Lower leg skin (tissue), 4 donors: ENCODE measurements at regions of chr7 and their contacts with region 1.

Region 1: DNA sequence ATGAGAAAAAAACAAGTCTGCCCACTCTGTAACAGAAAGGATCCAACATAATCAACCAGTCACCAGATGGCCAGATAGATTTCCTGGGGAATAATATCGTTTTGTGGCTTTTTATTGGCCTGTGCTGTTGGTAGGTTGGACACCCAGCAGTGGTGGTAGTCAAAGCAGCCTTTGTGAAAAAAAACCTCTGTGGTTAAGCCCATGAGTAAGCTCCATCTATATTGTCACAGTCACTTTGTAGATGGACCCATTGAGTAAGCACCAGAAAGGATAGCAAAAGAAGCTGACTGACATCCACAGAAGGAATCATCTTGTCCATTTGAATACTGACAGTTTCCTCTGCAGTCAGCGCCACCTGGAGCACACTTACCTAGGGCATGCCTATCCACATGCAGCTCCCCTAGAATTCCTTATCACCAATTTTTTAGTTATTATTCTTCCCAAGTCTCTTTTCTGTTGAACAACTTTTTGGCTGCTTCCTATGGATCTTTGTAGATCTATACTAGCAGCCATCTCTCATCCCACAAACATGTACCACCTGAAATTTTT is 96.9 kb downstream of the IQUB start:
- DNase-seq: no peak
- H3K4me3 ChIP-seq: no peak overlapping the region
- CTCF ChIP-seq: no peak
- POLR2A ChIP-seq: no peak

Region 2: GRCh38 chr7:121966276-121966934 is 1471.1 kb before region 1 on chr7:
- intact Hi-C with region 1: loop called (anchors 5 kb)
- DNase-seq: no peak
- H3K4me3 ChIP-seq: no peak overlapping the region
- CTCF ChIP-seq: no peak
- POLR2A ChIP-seq: no peak

Region 3: DNA sequence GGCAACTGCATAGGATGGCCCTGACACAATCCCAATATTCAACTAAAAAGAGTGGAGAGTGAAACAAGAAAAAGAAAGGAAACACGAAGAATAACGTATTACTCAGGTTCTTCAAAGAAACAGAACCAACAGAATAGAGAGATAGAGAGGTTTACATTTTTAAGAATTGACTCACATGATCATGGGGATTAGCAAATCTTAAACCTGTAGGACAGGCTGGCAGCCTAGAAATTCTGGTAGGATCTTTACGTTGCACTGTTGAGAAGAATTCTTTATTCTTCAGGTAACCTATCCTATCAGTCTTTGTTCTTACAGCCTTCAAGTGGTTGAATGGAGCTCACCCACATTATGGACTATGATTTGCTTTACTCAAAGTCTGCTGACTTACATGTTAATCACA is 1397.4 kb before region 1 on chr7:
- intact Hi-C with region 1: loop called (anchors 10 kb)
- DNase-seq: no peak
- H3K4me3 ChIP-seq: no peak overlapping the region
- CTCF ChIP-seq: no peak
- POLR2A ChIP-seq: no peak

Region 4: DNA sequence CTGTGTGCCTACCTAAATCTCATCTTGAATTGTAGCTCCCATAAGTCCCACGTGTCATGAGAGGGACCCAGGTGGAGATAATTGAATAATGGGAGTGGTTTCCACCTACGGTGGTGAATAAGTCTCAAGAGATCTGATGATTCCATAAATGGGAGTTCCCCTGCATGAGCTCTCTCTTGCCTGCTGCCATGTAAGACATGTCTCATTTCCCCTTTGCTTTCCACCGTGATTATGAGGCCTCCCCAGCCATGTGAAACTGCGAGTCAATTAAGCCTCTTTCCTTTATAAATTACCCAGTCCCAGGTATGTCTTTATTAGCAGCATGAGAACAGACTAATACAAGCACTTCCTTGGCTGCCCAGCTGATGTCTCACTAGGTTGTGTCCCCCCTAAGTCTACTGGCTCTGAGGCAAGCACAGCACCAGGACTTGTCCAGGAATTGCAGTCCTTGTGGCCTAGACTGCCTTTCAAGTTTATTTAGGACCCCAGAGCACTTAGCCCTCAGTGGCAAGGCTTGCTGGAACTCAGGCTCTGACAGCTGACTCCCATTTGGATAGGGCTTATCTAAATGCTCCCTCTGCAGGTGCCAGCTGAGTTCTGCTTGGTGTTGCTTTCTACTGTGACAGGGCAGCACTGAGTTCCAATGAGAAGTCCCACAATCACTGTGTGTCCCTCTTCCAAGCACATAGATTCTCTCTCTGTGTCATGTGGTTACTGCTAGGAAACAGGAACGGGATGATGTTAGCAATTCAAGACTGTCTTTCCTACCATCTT is 383.0 kb before region 1 on chr7:
- intact Hi-C with region 1: no loop called
- DNase-seq: no peak
- H3K4me3 ChIP-seq: no peak overlapping the region
- CTCF ChIP-seq: no peak
- POLR2A ChIP-seq: no peak